Pancreas (tissue), 10 donors: ENCODE measurements at regions of chr11 and their contacts with region 1.

Region 1: GRCh38 chr11:41461057-41461681 is 1.7 kb upstream of the LRRC4C start:
- DNase-seq: no peak
- ATAC-seq: peak in 3 of 4 donors; percentile 42 to 67 (median 49)
- H3K4me3 ChIP-seq: no peak overlapping the region
- H3K27ac ChIP-seq: no peak overlapping the region
- H3K4me1 ChIP-seq: no peaks in the 10 kb centered on the region
- H3K27me3 ChIP-seq: peaks cover 0 to 9% (median 3%) of the 10 kb centered on the region in 4 donors
- CTCF ChIP-seq: peak; percentile 60 to 79 (median 63)

Region 2: DNA sequence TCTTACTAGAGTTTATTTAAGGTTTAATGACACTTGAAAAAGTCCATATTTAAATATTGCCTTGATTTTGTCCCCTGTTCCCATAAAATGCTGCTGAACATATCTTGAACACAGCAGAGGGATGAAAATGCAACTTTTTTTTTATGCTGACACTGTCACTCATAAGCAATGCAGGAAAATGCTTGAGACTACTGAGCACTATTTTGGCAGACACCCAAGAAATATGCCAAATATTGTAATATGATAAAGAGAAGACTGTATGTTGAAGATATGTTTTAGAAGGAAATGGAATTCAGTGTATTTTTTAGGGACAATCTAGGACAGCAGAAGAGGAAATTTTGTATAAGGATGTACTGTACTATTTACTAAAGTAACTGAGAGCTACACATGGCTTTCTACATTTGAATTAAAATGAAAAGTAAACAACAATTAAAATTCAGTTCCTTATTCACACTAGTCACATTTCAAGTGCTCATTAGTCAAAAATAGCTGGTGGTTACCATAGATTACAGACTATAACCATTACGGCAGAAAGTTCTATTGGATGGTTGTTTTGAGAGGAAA is 60.3 kb before region 1 on chr11:
- intact Hi-C with region 1: no loop called
- DNase-seq: no peak
- ATAC-seq: no peak
- H3K4me3 ChIP-seq: no peak overlapping the region
- H3K27ac ChIP-seq: no peak overlapping the region
- H3K4me1 ChIP-seq: peaks cover 0 to 4% (median 0%) of the 10 kb centered on the region in 3 donors
- H3K27me3 ChIP-seq: no peaks in the 10 kb centered on the region
- CTCF ChIP-seq: no peak

Region 3: GRCh38 chr11:42524534-42525227 is 1063.5 kb after region 1 on chr11:
- intact Hi-C with region 1: loop called in 1 of 3 experiments (anchors 10 kb)
- DNase-seq: peak in 5 of 6 donors; percentile 20 to 65 (median 25)
- ATAC-seq: peak; percentile 46 to 90 (median 88)
- H3K4me3 ChIP-seq: no peak overlapping the region
- H3K27ac ChIP-seq: no peak overlapping the region
- H3K4me1 ChIP-seq: no peaks in the 10 kb centered on the region
- H3K27me3 ChIP-seq: no peaks in the 10 kb centered on the region
- CTCF ChIP-seq: peak; percentile 58 to 83 (median 74)